HepG2 (cell line): ENCODE measurements at regions of chr10 and their contacts with region 1.

Region 1: GRCh38 chr10:87842776-87843497 is 20.4 kb downstream of the KLLN start:
- DNase-seq: peak; percentile 60
- ATAC-seq: no peak
- H3K4me3 ChIP-seq: no peak overlapping the region
- H3K27ac ChIP-seq: peak overlapping the region; percentile 31
- H3K4me1 ChIP-seq: peaks cover 21% of the 10 kb centered on the region
- H3K27me3 ChIP-seq: no peaks in the 10 kb centered on the region
- CTCF ChIP-seq: no peak
- EP300 ChIP-seq: no peak
- POLR2A ChIP-seq: no peak
- RAD21 ChIP-seq: no peak

Region 2: DNA sequence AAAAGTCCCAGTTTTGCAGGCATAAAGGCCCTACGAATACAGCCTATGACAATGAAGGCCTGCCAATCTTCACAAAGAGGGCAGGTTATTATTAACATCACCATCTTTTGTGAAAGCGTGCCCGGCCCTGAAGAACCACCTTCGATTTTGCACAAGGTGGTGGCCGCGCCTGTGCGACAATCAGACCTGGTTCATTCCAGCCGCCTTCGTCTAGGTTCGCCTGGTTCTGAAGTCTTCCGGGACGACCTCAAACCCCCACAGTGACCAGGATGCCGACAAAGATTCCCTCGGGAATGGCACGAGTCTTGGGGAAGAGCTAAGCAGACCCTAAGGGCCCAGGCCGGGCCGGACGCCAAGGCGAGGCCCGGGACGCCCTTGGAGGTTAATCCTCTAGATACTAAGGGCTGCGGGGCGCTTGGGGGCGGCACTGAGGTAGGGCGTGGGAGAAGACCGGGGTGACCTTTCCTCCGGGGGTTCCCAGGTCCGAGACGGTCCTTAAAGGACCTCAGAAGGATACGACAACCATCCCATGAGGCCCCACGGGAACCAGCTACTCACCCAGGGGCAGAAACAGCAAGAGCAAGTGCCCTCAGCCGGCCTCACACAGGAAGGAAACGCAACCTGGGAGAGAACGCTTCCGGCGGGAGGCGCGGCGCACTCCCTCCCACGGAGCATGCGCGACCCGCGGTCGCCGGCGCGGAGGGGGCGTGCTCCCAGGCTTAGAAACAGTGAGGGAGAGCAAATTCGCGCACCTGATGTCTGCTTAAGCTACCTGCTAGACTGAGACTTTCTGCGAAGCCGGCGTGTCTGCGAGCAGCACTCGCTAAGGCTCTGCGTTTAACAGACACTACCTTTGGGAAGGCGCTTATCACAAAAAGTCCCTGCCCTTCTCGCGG is 25.1 kb before region 1 on chr10 and contains the start of gene ATAD1:
- CTCF ChIA-PET with region 1: no interaction called
- POLR2A ChIA-PET with region 1: interaction called, 10 read pairs
- in situ Hi-C with region 1: no loop called
- intact Hi-C with region 1: no loop called
- DNase-seq: peak; percentile 86
- ATAC-seq: peak; percentile 96
- H3K4me3 ChIP-seq: peak within 1 kb of the TSS; percentile 76 to 85 (median 78)
- H3K27ac ChIP-seq: peak within 1 kb of the TSS; percentile 89
- H3K4me1 ChIP-seq: peaks cover 32% of the 10 kb centered on the region
- H3K27me3 ChIP-seq: no peaks in the 10 kb centered on the region; a peak in 1 of 5 replicates
- CTCF ChIP-seq: no peak; the same call in 1 of the 2 replicates
- EP300 ChIP-seq: no peak
- POLR2A ChIP-seq: peak; percentile 88 to 90
- RAD21 ChIP-seq: no peak
- total RNA-seq, gene ATAD1: 23.2 and 28.2 TPM in 2 replicates